AG04450 (cell line): ENCODE measurements at regions of chr6 and their contacts with region 1.

Region 1: DNA sequence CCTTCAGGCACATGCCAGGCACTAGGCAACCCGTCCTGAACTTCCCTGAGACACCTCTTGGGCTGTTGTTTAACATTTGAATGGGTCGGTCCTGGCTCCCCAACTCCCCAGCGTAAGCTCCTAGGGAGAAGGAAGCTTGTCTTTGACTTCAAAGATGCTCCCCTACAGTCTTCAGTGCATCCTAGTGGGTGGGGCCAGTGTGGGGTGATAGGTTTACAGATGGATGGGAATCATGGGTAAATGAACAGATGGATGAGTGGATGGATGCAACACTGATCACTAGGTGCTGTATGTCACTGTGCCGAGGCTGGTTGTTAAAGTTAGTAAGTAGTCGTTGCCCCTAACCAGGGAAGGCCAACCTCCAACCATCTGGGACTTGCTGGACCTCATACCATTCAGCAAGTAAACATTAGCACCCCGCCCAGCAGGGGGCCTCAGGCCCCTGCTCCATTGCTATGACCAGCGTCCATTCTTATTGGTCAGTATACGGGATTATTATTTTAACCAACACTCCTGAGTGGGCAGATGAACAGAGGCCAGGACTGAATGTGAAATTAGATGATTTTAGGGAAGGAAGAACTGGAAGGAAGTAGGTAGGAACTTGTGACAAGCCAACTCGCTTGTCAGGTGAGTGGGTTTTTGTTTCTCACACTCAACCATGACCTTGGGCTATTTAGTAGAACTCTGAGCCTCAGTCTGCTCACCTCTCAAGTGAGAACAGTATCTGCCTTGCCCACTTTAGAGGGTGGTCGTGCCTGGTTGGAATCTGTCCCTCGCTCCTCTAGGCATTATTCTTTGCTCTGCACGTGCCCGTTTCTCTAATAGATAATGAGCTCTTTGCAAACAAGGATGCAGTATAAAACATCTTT is 82.9 kb upstream of the FOXP4 start:
- DNase-seq: peak; percentile 30
- H3K4me3 ChIP-seq: no peak overlapping the region
- H3K27ac ChIP-seq: no peak overlapping the region
- H3K27me3 ChIP-seq: peaks cover 1% of the 10 kb centered on the region
- CTCF ChIP-seq: peak; percentile 85

Region 2: DNA sequence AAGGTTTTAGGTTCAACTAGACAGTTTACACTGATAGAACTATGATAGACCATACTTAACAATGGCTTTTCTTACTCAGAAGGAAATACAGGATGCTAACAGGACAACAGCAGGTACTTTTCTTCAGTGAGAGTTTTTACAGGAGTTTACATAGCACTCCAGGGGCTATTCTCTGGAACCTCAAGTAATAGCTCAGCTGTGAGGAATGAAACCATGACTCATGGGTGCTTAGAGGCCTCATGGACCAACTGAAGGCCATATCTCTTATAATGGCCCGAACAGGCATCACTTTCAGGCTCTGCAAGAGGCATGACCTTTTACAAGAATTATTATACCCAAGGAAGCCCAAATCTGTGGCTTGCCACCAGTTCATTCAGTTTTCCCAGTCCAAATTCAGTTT is 340.9 kb before region 1 on chr6:
- CTCF ChIA-PET with region 1: no interaction called
- POLR2A ChIA-PET with region 1: no interaction called
- DNase-seq: peak; percentile 6
- H3K4me3 ChIP-seq: no peak overlapping the region
- H3K27ac ChIP-seq: no peak overlapping the region
- H3K27me3 ChIP-seq: no peaks in the 10 kb centered on the region
- CTCF ChIP-seq: no peak

Region 3: GRCh38 chr6:41442800-41443501 is 20.3 kb before region 1 on chr6:
- CTCF ChIA-PET with region 1: interaction called, 16 read pairs
- POLR2A ChIA-PET with region 1: no interaction called
- DNase-seq: no peak
- H3K4me3 ChIP-seq: peak overlapping the region; percentile 10; the same call in 1 of the 2 replicates
- H3K27ac ChIP-seq: no peak overlapping the region
- H3K27me3 ChIP-seq: peaks cover 40% of the 10 kb centered on the region
- CTCF ChIP-seq: peak; percentile 62

Region 4: DNA sequence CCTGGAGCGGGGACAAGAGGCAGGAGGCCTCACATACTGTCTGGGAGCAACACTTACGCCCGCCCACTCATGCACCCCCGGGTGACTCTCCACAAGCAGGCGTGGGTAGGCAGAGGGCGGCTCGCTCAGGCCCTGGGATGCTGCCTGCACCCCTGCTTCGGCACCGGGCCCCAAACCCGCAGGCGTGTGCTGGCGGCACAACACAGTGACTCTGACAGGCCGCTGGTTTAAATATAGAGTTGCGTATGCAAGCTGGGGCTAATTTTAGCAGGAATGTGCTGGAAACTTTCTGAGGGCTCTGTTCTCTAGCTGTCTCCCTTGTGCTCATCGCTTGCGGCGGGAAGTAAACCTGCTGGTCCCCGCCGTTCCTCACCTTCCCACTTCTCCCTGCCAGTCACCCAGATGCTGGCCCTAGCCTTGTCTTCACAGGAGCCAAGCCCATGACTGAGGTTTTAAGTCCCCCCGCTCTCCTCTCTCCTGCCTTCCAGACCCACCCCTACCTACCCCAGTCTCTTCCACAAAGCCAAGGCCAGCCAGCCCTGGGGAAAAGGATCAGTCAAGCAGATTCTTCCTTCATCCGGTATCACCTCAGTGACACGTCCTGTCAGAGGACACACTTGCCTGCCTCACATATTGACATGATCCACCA is 11.7 kb before region 1 on chr6:
- CTCF ChIA-PET with region 1: interaction called, 13 read pairs
- POLR2A ChIA-PET with region 1: interaction called, 3 read pairs
- DNase-seq: no peak
- H3K4me3 ChIP-seq: no peak overlapping the region
- H3K27ac ChIP-seq: peak overlapping the region; percentile 21
- H3K27me3 ChIP-seq: peaks cover 17% of the 10 kb centered on the region
- CTCF ChIP-seq: no peak